H1 (cell line): ENCODE measurements at regions of chr4 and their contacts with region 1.

Region 1: GRCh38 chr4:119628308-119629141 is at the start of gene PDE5A:
- DNase-seq: peak; percentile 79 to 91
- H3K4me3 ChIP-seq: peak within 1 kb of the TSS; percentile 75 to 96 (median 81)
- H3K27ac ChIP-seq: peak within 1 kb of the TSS; percentile 73; the same call in 1 of the 2 replicates
- H3K4me1 ChIP-seq: peaks cover 0 to 3% (median 0%) of the 10 kb centered on the region in 4 experiments; a peak in 2 of 7 replicates
- H3K27me3 ChIP-seq: no peaks in the 10 kb centered on the region
- CTCF ChIP-seq: peak; percentile 67 to 84 (median 82)
- EP300 ChIP-seq: peak in 1 of 2 experiments; percentile 87; a peak in 1 of 3 replicates
- POLR2A ChIP-seq: peak; percentile 22 to 78
- RAD21 ChIP-seq: peak; percentile 83 to 87
- total RNA-seq, gene PDE5A: 29.5 and 32.4 TPM in 2 replicates

Region 2: GRCh38 chr4:119490335-119490734 is 138.2 kb before region 1 on chr4:
- CTCF ChIA-PET with region 1: interaction called, 10 read pairs
- POLR2A ChIA-PET with region 1: no interaction called
- DNase-seq: no peak
- H3K4me3 ChIP-seq: no peak overlapping the region
- H3K27ac ChIP-seq: no peak overlapping the region
- H3K4me1 ChIP-seq: no peaks in the 10 kb centered on the region
- H3K27me3 ChIP-seq: no peaks in the 10 kb centered on the region
- CTCF ChIP-seq: peak in 2 of 3 experiments; percentile 37 to 55; a peak in 2 of 4 replicates
- EP300 ChIP-seq: no peak
- POLR2A ChIP-seq: no peak
- RAD21 ChIP-seq: peak; percentile 69 to 72

Region 3: DNA sequence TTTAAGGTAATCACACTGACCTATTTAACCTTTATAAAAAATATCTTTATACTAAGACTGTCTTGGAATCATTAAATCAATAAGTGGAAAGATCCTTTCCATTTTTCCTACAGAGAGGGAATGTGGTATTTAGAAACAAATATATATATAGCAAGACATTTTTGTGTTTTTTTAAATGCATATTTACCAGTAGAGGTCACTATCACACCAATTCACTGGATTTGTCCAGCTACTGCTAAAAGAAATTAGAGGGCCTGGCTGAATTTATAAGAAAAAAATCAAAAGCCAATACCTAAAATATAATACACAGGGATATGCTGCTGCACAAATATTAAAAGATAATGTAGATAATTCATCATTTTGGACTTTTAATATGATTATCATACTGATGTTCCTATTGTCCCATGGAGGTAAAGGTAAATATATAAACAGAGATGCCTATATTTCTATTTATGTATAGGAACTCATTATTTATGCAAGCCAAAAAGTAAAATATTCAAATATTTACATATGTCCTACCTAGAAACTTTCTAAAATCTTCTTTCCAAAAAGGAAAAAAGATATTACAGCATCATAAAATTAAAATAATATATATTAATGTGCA is 69.4 kb before region 1 on chr4:
- CTCF ChIA-PET with region 1: interaction called, 23 read pairs
- POLR2A ChIA-PET with region 1: interaction called, 5 read pairs
- DNase-seq: no peak
- H3K4me3 ChIP-seq: no peak overlapping the region
- H3K27ac ChIP-seq: no peak overlapping the region
- H3K4me1 ChIP-seq: no peaks in the 10 kb centered on the region
- H3K27me3 ChIP-seq: peaks cover 0 to 1% (median 0%) of the 10 kb centered on the region in 4 experiments; a peak in 1 of 7 replicates
- CTCF ChIP-seq: peak in 1 of 3 experiments; percentile 23; a peak in 1 of 4 replicates
- EP300 ChIP-seq: no peak
- POLR2A ChIP-seq: no peak
- RAD21 ChIP-seq: peak; percentile 43 to 57

Region 4: GRCh38 chr4:119783186-119783983 is 154.9 kb after region 1 on chr4:
- CTCF ChIA-PET with region 1: interaction called, 15 read pairs
- POLR2A ChIA-PET with region 1: no interaction called
- DNase-seq: no peak
- H3K4me3 ChIP-seq: no peak overlapping the region
- H3K27ac ChIP-seq: no peak overlapping the region
- H3K4me1 ChIP-seq: peaks cover 0 to 2% (median 0%) of the 10 kb centered on the region in 4 experiments; a peak in 1 of 7 replicates
- H3K27me3 ChIP-seq: no peaks in the 10 kb centered on the region
- CTCF ChIP-seq: no peak
- EP300 ChIP-seq: no peak
- POLR2A ChIP-seq: no peak
- RAD21 ChIP-seq: no peak

Region 5: DNA sequence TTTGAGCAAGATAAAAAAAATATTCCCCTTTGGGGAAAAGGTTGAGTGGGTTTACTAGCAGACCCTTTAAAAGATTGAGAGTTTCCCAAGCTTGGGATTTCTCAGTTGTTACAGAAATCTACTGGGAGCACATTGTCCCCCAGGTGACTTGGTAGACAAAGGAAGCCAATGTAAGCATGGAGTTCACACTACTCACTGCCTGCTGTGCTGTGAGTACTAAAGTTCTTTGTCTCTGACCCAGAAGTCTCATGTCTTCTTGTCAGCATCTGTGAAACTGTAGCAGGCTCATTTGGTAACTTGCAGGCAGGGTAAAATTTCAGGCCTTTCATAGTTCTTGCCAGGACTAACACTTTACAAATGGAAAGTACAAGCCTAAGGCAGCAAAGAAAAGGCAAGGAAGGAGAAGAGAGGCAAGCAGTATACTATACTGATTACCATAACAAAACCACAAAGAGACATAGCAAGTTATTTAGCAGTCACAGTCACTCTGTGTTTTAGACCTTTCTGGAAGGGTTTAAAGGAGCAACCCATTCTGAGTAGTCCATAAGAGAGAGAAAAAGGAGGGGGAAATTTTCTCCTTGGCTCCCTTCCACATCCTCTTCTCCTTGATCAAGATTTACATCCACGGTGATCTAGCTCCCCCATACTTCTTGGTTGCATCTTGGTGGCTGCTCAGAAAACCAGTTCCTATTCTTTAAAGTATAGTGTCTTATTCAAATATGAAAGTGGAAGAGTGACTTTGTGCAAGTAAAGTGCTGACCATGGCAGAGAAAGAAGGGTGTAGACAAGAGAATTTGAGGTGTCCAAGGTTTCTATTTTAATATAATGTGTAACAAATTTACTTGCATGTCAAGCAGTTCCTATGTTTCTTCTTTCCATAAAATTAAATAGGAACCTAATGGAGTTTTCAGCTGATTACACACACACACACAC is 160.1 kb after region 1 on chr4:
- CTCF ChIA-PET with region 1: interaction called, 15 read pairs
- POLR2A ChIA-PET with region 1: no interaction called
- DNase-seq: no peak
- H3K4me3 ChIP-seq: no peak overlapping the region
- H3K27ac ChIP-seq: peak overlapping the region; percentile 32; the same call in 1 of the 2 replicates
- H3K4me1 ChIP-seq: peaks cover 0 to 4% (median 2%) of the 10 kb centered on the region in 4 experiments; a peak in 2 of 7 replicates
- H3K27me3 ChIP-seq: no peaks in the 10 kb centered on the region
- CTCF ChIP-seq: no peak
- EP300 ChIP-seq: no peak
- POLR2A ChIP-seq: no peak
- RAD21 ChIP-seq: no peak; a peak in 1 of 4 replicates

Region 6: GRCh38 chr4:119872371-119873031 is 244.0 kb after region 1 on chr4:
- CTCF ChIA-PET with region 1: no interaction called
- POLR2A ChIA-PET with region 1: no interaction called
- DNase-seq: no peak
- H3K4me3 ChIP-seq: no peak overlapping the region
- H3K27ac ChIP-seq: no peak overlapping the region
- H3K4me1 ChIP-seq: no peaks in the 10 kb centered on the region
- H3K27me3 ChIP-seq: no peaks in the 10 kb centered on the region
- CTCF ChIP-seq: no peak
- EP300 ChIP-seq: no peak
- POLR2A ChIP-seq: no peak
- RAD21 ChIP-seq: no peak

Region 7: DNA sequence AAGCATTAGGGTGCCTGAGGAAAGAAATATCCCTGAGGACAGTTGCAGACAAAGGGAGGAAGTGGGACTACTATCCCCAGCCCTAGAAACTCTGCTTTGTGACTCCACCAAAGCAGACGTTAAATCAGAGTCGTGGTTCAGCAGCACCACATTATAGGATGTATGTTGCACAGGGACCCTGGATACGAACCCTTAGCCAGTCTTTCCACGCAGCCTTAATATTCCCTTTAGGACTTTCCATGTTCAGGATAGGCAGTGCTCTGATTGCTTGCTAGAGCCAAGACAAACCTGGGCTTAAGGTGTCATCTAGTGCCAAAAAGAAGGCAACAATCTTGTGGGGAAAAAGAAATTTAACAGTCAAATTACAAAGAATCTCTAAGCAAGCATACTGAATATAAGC is 375.5 kb after region 1 on chr4:
- CTCF ChIA-PET with region 1: no interaction called
- POLR2A ChIA-PET with region 1: interaction called, 10 read pairs
- DNase-seq: peak in 1 of 2 experiments; percentile 59
- H3K4me3 ChIP-seq: no peak overlapping the region
- H3K27ac ChIP-seq: no peak overlapping the region
- H3K4me1 ChIP-seq: peaks cover 0 to 7% (median 0%) of the 10 kb centered on the region in 4 experiments; a peak in 1 of 7 replicates
- H3K27me3 ChIP-seq: peaks cover 0 to 9% (median 2%) of the 10 kb centered on the region in 4 experiments; a peak in 4 of 7 replicates
- CTCF ChIP-seq: no peak
- EP300 ChIP-seq: no peak
- POLR2A ChIP-seq: peak in 1 of 2 experiments; percentile 85; a peak in 2 of 3 replicates
- RAD21 ChIP-seq: peak; percentile 15 to 22; a peak in 2 of 4 replicates